PC-9 (cell line): ENCODE measurements at regions of chr20 and their contacts with region 1.

Region 1: GRCh38 chr20:53738039-53738944 is 144.7 kb upstream of the ZNF217 start:
- DNase-seq: peak; percentile 85 to 97
- H3K4me3 ChIP-seq: peak overlapping the region; percentile 62
- H3K27ac ChIP-seq: peak overlapping the region; percentile 98
- H3K4me1 ChIP-seq: peaks cover 89% of the 10 kb centered on the region
- H3K27me3 ChIP-seq: no peaks in the 10 kb centered on the region
- CTCF ChIP-seq: no peak

Region 2: DNA sequence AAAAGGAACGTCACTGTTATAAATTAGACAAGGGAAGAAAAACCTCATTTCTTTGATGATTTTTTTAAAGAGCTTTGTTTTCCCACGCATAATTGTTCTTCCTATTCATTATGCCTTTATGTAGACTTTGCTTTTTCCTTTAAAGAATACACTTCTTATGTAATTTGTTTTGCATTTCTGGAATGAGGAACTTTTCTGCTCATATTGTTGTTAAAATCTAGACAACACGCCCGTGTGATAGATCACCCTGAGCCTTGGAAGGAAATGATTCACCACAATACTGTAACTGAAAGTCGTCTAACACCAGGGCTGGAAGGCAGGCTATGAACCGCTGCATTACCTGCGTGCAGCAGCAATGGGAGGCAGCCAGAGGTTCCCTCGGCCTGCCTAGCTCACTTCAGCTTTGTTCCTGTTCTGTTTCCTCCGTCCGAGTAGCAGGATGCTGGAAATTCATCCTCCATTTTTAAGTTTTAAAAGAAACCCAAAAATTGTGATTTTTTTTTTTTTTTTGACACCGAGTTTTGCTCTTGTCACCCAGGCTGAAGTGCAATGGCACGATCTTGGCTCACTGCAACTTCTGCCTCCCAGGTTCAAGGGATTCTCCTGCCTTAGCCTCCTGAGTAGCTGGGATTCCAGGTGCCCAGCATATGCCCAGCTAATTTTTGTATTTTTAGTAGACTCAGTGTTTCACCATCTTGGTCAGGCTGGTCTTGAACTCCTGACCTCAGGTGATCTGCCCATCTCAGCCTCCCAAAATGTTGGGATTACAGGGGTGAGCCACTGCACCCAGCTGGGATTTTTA is 95.1 kb before region 1 on chr20:
- CTCF ChIA-PET with region 1: interaction called, 8 read pairs
- POLR2A ChIA-PET with region 1: interaction called, 7 read pairs
- intact Hi-C with region 1: loop called (anchors 2 kb)
- DNase-seq: peak; percentile 73 to 98
- H3K4me3 ChIP-seq: peak overlapping the region; percentile 26
- H3K27ac ChIP-seq: peak overlapping the region; percentile 94
- H3K4me1 ChIP-seq: peaks cover 39% of the 10 kb centered on the region
- H3K27me3 ChIP-seq: no peaks in the 10 kb centered on the region
- CTCF ChIP-seq: no peak; the same call in 1 of the 2 replicates

Region 3: DNA sequence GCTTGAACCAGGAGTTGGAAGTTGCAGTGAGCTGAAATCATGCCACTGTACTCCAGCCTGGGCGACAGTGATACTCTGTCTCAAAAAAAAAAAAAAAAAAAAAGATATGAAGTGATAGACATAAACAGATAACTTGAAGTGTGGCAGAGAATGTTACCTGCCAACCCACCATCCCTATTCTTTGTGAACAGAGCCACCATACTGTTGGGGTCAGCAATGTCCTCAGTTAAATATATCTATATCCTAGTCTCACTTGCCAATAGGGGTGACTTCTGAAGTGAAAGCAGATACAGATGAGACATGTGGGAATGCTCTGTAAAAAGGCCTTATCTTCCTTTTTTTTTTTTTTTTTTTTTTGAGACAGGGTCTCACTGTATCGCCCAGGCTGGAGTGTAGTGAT is 16.2 kb before region 1 on chr20:
- CTCF ChIA-PET with region 1: no interaction called
- POLR2A ChIA-PET with region 1: interaction called, 12 read pairs
- intact Hi-C with region 1: no loop called
- DNase-seq: no peak
- H3K4me3 ChIP-seq: no peak overlapping the region
- H3K27ac ChIP-seq: no peak overlapping the region
- H3K4me1 ChIP-seq: no peaks in the 10 kb centered on the region
- H3K27me3 ChIP-seq: no peaks in the 10 kb centered on the region
- CTCF ChIP-seq: no peak

Region 4: DNA sequence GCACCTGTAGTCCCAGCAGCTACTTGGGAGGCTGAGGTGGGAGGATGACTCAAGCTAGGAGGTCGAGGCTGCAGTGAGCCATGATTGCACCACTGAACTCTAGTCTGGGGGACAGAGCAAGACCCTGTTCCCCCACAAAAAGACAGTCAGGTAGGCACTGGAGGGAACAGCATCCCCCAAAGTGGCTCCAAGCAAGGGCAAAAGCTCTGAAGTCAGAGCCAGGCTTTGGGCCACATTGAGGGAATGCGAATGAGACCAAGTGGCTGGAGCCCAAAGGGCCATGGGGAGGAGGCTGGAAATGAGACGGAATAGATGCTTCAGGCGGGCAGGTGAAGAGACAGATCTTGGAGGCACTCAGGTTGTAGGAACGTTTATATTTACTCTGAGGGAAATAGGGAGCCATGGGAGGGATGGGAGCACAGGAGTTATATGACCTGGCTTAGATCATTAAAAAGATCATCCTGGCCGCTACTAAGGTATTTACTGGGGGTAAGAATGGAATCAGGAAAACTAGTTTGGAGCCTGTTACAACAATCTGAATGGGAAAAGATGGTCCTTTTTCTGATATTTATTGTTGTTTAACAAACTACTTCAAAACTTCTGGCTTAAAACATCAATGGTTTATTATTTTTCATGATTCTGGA is 85.0 kb after region 1 on chr20:
- CTCF ChIA-PET with region 1: interaction called, 18 read pairs
- POLR2A ChIA-PET with region 1: interaction called, 6 read pairs
- intact Hi-C with region 1: no loop called
- DNase-seq: no peak
- H3K4me3 ChIP-seq: no peak overlapping the region
- H3K27ac ChIP-seq: no peak overlapping the region
- H3K4me1 ChIP-seq: peaks cover 27% of the 10 kb centered on the region
- H3K27me3 ChIP-seq: no peaks in the 10 kb centered on the region
- CTCF ChIP-seq: no peak

Region 5: DNA sequence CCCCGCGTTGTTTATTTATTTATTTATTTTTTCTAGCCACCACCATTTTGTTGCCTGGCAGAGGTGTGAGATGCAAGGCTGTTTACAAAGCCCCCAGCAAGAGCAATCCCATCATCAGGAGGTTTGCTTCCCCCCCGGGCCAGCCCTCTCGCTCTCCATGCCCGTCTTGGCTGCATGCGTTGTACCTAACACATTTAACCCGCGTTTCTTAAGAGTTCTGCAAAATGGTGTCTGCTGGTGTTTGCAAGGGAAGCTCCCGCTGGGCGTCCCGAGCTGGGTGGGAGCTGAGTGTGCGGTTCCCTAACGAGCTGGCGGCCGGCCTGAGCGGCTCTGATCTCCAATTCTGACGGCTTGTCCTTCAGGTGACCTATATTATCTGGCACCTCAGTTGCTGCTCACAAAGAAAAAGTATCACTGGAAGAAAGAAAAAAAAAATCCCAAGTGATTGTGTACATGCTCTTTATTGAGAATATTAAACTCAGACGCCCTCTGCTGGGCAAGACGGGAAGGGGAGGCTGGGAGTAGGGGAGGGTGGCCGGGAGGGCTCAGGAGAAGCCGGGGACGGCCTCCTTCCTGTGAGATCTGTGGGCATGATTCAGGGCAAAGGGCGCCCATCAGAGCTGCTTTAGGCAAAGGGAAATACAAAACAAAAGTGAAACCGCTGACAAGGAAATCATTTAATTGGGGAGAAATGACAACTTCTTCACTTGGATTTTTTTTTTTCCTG is 177.3 kb after region 1 on chr20:
- CTCF ChIA-PET with region 1: interaction called, 3 read pairs
- POLR2A ChIA-PET with region 1: no interaction called
- intact Hi-C with region 1: loop called (anchors 1 kb)
- DNase-seq: peak; percentile 95 to 98
- H3K4me3 ChIP-seq: peak overlapping the region; percentile 61
- H3K27ac ChIP-seq: peak overlapping the region; percentile 93
- H3K4me1 ChIP-seq: peaks cover 47% of the 10 kb centered on the region
- H3K27me3 ChIP-seq: no peaks in the 10 kb centered on the region
- CTCF ChIP-seq: peak; percentile 97

Region 6: GRCh38 chr20:54188132-54188849 is 450.0 kb after region 1 on chr20:
- CTCF ChIA-PET with region 1: no interaction called
- POLR2A ChIA-PET with region 1: no interaction called
- intact Hi-C with region 1: no loop called
- DNase-seq: no peak
- H3K4me3 ChIP-seq: no peak overlapping the region
- H3K27ac ChIP-seq: no peak overlapping the region
- H3K4me1 ChIP-seq: no peaks in the 10 kb centered on the region
- H3K27me3 ChIP-seq: no peaks in the 10 kb centered on the region
- CTCF ChIP-seq: no peak